Activated T-helper 1 cell treated with anti-CD3 and anti-CD28 coated beads, Interleukin-12 subunit alpha, Interleukin-12 subunit beta, Interleukin-2, Interleukin-4 antibody, amounts not matched to agents 30 ng/mL and 10 ng/mL and 1 ng/mL, durations not matched to agents 14 hours and 24 hours and 36 hours (primary cell): ENCODE measurements at regions of chr1 and their contacts with region 1.

Region 1: GRCh38 chr1:92583821-92584760 is 97.4 kb upstream of the GFI1 start:
- DNase-seq: no peak
- H3K4me3 Mint-ChIP-seq: peak overlapping the region; percentile 62
- H3K27ac Mint-ChIP-seq: peak overlapping the region; percentile 91
- H3K4me1 Mint-ChIP-seq: peaks cover 75% of the 10 kb centered on the region
- H3K27me3 Mint-ChIP-seq: no peaks in the 10 kb centered on the region

Region 2: GRCh38 chr1:92365378-92366039 is 218.6 kb before region 1 on chr1:
- intact Hi-C with region 1: loop called (anchors 1 kb)
- DNase-seq: peak; percentile 10
- H3K4me3 Mint-ChIP-seq: peak overlapping the region; percentile 3
- H3K27ac Mint-ChIP-seq: peak overlapping the region; percentile 76
- H3K4me1 Mint-ChIP-seq: peaks cover 59% of the 10 kb centered on the region
- H3K27me3 Mint-ChIP-seq: no peaks in the 10 kb centered on the region

Region 3: DNA sequence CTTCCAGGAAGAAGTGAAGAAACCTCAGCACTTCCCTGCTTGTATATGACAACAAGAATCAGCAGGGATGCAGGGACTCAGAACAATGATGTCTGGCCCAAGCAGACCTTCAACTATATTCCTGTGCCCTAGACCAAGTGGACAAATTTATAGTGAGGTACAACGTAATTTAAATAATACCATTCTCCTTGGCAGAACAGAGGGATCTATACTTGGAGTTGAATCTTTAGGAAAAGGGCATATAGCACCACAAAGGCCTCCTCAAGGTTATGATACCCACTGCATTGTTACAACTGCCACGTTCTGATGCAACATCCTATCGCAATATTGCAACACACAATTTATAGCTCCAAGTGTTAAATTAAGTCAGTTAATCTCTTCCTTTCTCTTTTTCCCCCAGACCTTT is 68.3 kb before region 1 on chr1:
- intact Hi-C with region 1: no loop called
- DNase-seq: no peak
- H3K4me3 Mint-ChIP-seq: no peak overlapping the region
- H3K27ac Mint-ChIP-seq: no peak overlapping the region
- H3K4me1 Mint-ChIP-seq: peaks cover 24% of the 10 kb centered on the region
- H3K27me3 Mint-ChIP-seq: no peaks in the 10 kb centered on the region

Region 4: DNA sequence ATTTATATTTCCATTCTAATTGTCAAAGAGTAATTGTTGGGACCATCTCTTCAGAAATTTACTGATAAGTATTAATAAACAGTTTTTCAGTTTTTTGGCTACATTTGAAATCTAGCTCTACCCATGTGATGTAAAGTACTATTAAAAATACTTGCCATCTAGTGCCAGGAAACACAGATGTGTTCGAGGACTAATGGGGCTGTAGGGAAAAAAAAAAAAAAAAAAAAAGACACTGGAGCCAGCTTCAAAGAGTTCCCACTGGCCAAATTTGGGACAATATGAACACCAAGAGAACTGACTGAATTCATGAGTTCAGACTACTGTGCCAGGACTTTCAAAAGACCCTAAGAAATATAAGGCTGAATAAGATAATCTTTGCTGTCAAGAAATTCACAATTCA is 32.2 kb before region 1 on chr1:
- intact Hi-C with region 1: no loop called
- DNase-seq: no peak
- H3K4me3 Mint-ChIP-seq: no peak overlapping the region
- H3K27ac Mint-ChIP-seq: no peak overlapping the region
- H3K4me1 Mint-ChIP-seq: peaks cover 26% of the 10 kb centered on the region
- H3K27me3 Mint-ChIP-seq: no peaks in the 10 kb centered on the region

Region 5: DNA sequence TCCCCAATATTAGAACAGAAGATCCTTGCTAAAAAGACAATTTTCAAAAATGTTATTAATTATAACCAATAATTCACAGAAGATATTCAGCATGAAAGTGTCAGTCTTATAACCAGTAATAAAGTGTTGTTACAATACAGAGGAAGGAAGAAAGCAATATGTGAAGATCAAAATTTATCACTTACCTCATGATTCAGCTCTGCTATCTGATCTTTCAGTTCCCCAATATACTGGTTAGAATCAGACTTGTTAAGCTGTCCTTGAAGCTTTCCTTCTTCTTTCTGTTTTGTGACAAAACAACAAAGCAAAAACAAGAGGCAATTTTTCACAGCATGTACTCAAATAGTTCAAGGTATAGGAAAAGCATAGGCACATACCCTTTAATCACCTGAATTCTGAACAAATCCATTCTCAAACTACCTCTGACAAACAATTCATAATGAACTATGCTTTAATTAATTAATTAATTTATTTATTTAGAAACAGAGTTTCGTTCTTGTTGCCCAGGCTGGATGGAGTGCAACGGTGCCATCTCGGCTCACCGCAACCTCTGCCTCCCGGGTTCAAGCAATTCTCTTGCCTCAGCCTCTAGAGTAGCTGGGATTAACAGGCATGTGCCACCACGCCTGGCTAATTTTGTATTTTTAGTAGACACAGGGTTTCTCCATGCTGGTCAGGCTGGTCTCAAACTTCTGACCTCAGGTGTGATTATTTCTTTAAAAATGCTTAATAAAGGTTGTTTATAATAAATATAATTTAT is 20.5 kb before region 1 on chr1:
- intact Hi-C with region 1: loop called (anchors 1 kb)
- DNase-seq: no peak
- H3K4me3 Mint-ChIP-seq: no peak overlapping the region
- H3K27ac Mint-ChIP-seq: peak overlapping the region; percentile 12
- H3K4me1 Mint-ChIP-seq: peaks cover 41% of the 10 kb centered on the region
- H3K27me3 Mint-ChIP-seq: no peaks in the 10 kb centered on the region

Region 6: GRCh38 chr1:92599184-92599583 is 15.1 kb after region 1 on chr1:
- intact Hi-C with region 1: loop called (anchors 2 kb)
- DNase-seq: no peak
- H3K4me3 Mint-ChIP-seq: no peak overlapping the region
- H3K27ac Mint-ChIP-seq: no peak overlapping the region
- H3K4me1 Mint-ChIP-seq: peaks cover 27% of the 10 kb centered on the region
- H3K27me3 Mint-ChIP-seq: no peaks in the 10 kb centered on the region